Endothelial cell of umbilical vein (primary cell): ENCODE measurements at regions of chr7 and their contacts with region 1.

Region 1: DNA sequence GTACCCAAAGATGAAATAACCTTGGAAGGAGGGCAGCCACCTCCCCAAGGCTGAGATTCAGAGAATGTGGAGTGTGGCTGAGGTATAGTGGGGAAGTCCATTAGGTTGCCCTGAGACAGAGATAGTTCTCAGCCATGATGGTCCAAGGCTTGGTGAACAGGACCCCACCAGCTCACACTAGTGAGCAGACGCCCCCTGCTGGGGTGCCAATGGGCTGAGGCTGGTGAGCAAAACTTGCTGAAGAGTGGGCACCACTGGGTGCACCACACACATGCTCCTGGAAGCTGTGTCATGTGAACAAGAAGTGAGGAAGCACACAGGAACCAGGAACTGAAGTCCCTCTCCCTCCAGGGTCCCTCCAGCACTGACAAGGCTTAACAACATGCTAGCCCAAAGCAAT is 8.9 kb downstream of the FBXL13 start:
- DNase-seq: peak; percentile 51
- H3K4me3 ChIP-seq: no peak overlapping the region
- H3K27ac ChIP-seq: no peak overlapping the region
- H3K4me1 ChIP-seq: peaks cover 8% of the 10 kb centered on the region
- H3K27me3 ChIP-seq: no peaks in the 10 kb centered on the region
- CTCF ChIP-seq: peak; percentile 77 to 79
- POLR2A ChIP-seq: no peak

Region 2: GRCh38 chr7:102814025-102814471 is 251.6 kb before region 1 on chr7:
- CTCF ChIA-PET with region 1: interaction called, 18 read pairs
- POLR2A ChIA-PET with region 1: interaction called, 11 read pairs
- dilution Hi-C with region 1: no loop called
- intact Hi-C with region 1: no loop called
- DNase-seq: peak; percentile 81
- H3K4me3 ChIP-seq: no peak overlapping the region
- H3K27ac ChIP-seq: peak overlapping the region; percentile 47
- H3K4me1 ChIP-seq: peaks cover 36% of the 10 kb centered on the region
- H3K27me3 ChIP-seq: no peaks in the 10 kb centered on the region
- CTCF ChIP-seq: no peak
- POLR2A ChIP-seq: no peak

Region 3: DNA sequence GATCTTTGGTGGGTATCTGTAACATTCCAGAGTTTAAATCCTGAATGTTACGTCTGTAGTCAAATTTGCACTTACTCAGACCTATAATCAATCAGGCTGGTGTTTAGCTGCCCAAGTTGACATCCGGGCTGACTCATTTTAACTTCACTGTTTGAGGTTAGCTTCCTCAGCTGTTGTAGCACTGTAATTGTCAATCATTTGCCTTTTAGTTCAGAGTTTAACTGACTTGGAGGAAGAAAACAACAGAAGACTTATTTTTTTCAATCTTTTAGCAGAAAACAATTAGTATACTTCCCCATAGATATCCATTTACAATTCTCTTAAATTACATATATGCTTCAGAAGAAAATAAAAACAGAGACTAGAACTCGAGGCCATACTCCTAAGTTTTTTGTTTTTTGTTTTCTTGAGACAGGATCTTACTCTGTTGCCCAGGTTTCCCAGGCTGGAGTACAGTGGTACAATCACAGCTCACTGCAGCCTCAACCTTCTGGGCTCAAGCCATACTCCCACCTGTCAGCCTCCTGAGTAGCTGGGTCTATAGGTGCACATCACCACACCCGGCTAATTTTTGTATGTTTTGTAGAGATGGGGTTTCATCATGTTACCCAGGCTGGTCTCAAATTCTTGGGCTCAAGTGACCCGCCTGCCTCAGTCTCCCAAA is 191.4 kb before region 1 on chr7:
- CTCF ChIA-PET with region 1: interaction called, 62 read pairs
- POLR2A ChIA-PET with region 1: no interaction called
- dilution Hi-C with region 1: no loop called
- intact Hi-C with region 1: loop called (anchors 1 kb)
- DNase-seq: peak; percentile 96
- H3K4me3 ChIP-seq: no peak overlapping the region
- H3K27ac ChIP-seq: peak overlapping the region; percentile 98
- H3K4me1 ChIP-seq: peaks cover 59% of the 10 kb centered on the region
- H3K27me3 ChIP-seq: no peaks in the 10 kb centered on the region
- CTCF ChIP-seq: no peak
- POLR2A ChIP-seq: peak; percentile 23

Region 4: DNA sequence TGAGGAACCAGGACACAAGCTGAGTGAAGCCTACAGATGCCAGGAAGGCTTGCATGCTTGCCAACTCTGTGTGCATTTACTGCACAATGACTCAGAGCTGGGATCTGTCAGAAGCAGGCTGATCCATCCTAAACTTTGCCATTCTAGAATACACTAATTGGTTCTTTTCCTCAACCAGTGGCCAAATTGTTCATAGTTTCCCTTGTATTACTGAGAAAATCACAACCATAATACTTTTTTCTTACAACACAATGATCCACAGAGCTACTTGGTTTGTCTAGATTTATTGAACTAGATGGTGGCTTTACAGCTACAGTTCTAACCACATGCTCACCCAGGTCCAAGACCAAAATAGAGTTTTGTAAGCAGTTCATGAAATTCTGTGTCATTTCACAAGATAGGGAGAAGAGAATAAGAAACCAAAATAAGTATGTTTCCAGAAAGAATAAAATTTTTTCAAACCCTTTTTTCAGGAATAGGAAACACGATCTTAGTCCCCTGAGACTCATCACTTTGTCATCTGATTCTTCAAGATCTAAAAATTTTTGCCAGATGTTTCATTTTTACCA is 173.9 kb before region 1 on chr7:
- CTCF ChIA-PET with region 1: interaction called, 36 read pairs
- POLR2A ChIA-PET with region 1: no interaction called
- dilution Hi-C with region 1: no loop called
- intact Hi-C with region 1: no loop called
- DNase-seq: peak; percentile 94
- H3K4me3 ChIP-seq: no peak overlapping the region
- H3K27ac ChIP-seq: peak overlapping the region; percentile 89
- H3K4me1 ChIP-seq: peaks cover 51% of the 10 kb centered on the region
- H3K27me3 ChIP-seq: no peaks in the 10 kb centered on the region
- CTCF ChIP-seq: no peak
- POLR2A ChIP-seq: no peak

Region 5: GRCh38 chr7:102925976-102926782 is 139.5 kb before region 1 on chr7:
- CTCF ChIA-PET with region 1: interaction called, 15 read pairs
- POLR2A ChIA-PET with region 1: no interaction called
- dilution Hi-C with region 1: no loop called
- intact Hi-C with region 1: no loop called
- DNase-seq: peak; percentile 50
- H3K4me3 ChIP-seq: no peak overlapping the region
- H3K27ac ChIP-seq: no peak overlapping the region
- H3K4me1 ChIP-seq: peaks cover 9% of the 10 kb centered on the region
- H3K27me3 ChIP-seq: no peaks in the 10 kb centered on the region
- CTCF ChIP-seq: no peak
- POLR2A ChIP-seq: no peak

Region 6: GRCh38 chr7:102991540-102992214 is 74.0 kb before region 1 on chr7:
- CTCF ChIA-PET with region 1: interaction called, 35 read pairs
- POLR2A ChIA-PET with region 1: no interaction called
- dilution Hi-C with region 1: no loop called
- intact Hi-C with region 1: loop called (anchors 1 kb)
- DNase-seq: peak; percentile 97
- H3K4me3 ChIP-seq: no peak overlapping the region
- H3K27ac ChIP-seq: peak overlapping the region; percentile 99
- H3K4me1 ChIP-seq: peaks cover 43% of the 10 kb centered on the region
- H3K27me3 ChIP-seq: no peaks in the 10 kb centered on the region
- CTCF ChIP-seq: no peak
- POLR2A ChIP-seq: peak; percentile 83

Region 7: GRCh38 chr7:103127006-103127405 is 61.3 kb after region 1 on chr7:
- CTCF ChIA-PET with region 1: no interaction called
- POLR2A ChIA-PET with region 1: no interaction called
- dilution Hi-C with region 1: no loop called
- intact Hi-C with region 1: no loop called
- DNase-seq: no peak
- H3K4me3 ChIP-seq: no peak overlapping the region
- H3K27ac ChIP-seq: no peak overlapping the region
- H3K4me1 ChIP-seq: no peaks in the 10 kb centered on the region
- H3K27me3 ChIP-seq: no peaks in the 10 kb centered on the region
- CTCF ChIP-seq: no peak
- POLR2A ChIP-seq: no peak